ENCODE measurements at regions of chr7 and their contacts with region 1.

Region 1: GRCh38 chr7:43700059-43700501 is 29.2 kb downstream of the COA1 start:
- DNase-seq: peak; percentile 42
- ATAC-seq: peak; percentile 83
- H3K4me3 ChIP-seq: no peak overlapping the region
- H3K27ac ChIP-seq: no peak overlapping the region
- H3K4me1 ChIP-seq: no peaks in the 10 kb centered on the region
- H3K27me3 ChIP-seq: no peaks in the 10 kb centered on the region
- CTCF ChIP-seq: peak; percentile 83; the same call in 1 of the 2 replicates

Region 2: GRCh38 chr7:43628431-43628830 is 71.6 kb before region 1 on chr7:
- CTCF ChIA-PET with region 1: no interaction called
- POLR2A ChIA-PET with region 1: no interaction called
- in situ Hi-C with region 1: no loop called
- intact Hi-C with region 1: no loop called
- DNase-seq: no peak
- ATAC-seq: no peak
- H3K4me3 ChIP-seq: no peak overlapping the region
- H3K27ac ChIP-seq: no peak overlapping the region
- H3K4me1 ChIP-seq: no peaks in the 10 kb centered on the region
- H3K27me3 ChIP-seq: no peaks in the 10 kb centered on the region
- CTCF ChIP-seq: no peak

Region 3: DNA sequence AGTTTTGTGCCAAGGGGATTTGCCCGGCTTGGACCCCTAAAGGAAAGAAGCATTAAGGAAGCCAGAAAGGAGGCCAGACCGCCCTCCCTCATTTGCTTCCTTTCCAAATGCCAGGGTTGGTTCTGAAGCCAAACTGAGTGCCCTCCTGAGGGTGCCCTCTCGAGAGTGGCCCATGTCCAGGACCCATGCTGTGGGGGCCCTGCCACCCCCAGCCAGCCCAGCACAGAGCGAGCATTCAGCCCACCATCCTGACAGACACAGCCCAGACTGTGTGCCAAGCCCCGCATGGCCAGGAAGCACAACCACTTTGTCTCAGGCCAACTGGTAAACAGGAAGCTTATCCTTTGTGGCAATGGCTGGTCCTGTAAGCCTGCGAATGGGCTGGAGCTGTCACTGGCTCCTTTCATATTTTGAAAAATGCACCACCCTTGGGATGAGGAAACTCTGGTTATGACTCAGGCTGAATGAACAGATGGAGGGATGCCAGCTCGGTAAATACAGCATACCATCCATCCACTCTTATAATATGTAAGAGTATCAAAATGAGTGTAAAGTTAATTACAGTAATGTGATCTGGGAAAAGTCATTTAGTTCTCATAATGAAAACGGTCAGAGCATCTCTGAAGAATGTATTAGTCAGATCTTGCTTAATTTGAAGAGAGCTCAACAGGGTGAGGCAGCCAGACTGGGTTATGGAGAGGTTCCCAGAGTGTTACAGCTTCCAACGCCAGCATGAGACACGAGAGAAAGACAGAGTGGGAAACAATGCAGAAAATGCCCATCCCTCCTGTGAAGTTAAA is 52.2 kb before region 1 on chr7:
- CTCF ChIA-PET with region 1: interaction called, 8 read pairs
- POLR2A ChIA-PET with region 1: no interaction called
- in situ Hi-C with region 1: no loop called
- intact Hi-C with region 1: loop called (anchors 5 kb)
- DNase-seq: peak; percentile 98
- ATAC-seq: peak; percentile 81
- H3K4me3 ChIP-seq: peak overlapping the region in 1 of 2 experiments; percentile 6; a peak in 1 of 4 replicates
- H3K27ac ChIP-seq: peak overlapping the region; percentile 69
- H3K4me1 ChIP-seq: peaks cover 51% of the 10 kb centered on the region
- H3K27me3 ChIP-seq: no peaks in the 10 kb centered on the region
- CTCF ChIP-seq: no peak

Region 4: GRCh38 chr7:43735802-43736541 is 35.9 kb after region 1 on chr7:
- CTCF ChIA-PET with region 1: no interaction called
- POLR2A ChIA-PET with region 1: no interaction called
- in situ Hi-C with region 1: no loop called
- intact Hi-C with region 1: no loop called
- DNase-seq: no peak
- ATAC-seq: no peak
- H3K4me3 ChIP-seq: no peak overlapping the region
- H3K27ac ChIP-seq: no peak overlapping the region
- H3K4me1 ChIP-seq: no peaks in the 10 kb centered on the region
- H3K27me3 ChIP-seq: no peaks in the 10 kb centered on the region
- CTCF ChIP-seq: no peak

Region 5: GRCh38 chr7:43799589-43799988 is 99.5 kb after region 1 on chr7:
- CTCF ChIA-PET with region 1: no interaction called
- POLR2A ChIA-PET with region 1: no interaction called
- in situ Hi-C with region 1: no loop called
- intact Hi-C with region 1: no loop called
- DNase-seq: no peak
- ATAC-seq: peak; percentile 66
- H3K4me3 ChIP-seq: no peak overlapping the region
- H3K27ac ChIP-seq: no peak overlapping the region
- H3K4me1 ChIP-seq: no peaks in the 10 kb centered on the region
- H3K27me3 ChIP-seq: no peaks in the 10 kb centered on the region
- CTCF ChIP-seq: no peak

Region 6: GRCh38 chr7:43834463-43835251 is 134.6 kb after region 1 on chr7:
- CTCF ChIA-PET with region 1: interaction called, 15 read pairs
- POLR2A ChIA-PET with region 1: no interaction called
- in situ Hi-C with region 1: no loop called
- intact Hi-C with region 1: no loop called
- DNase-seq: no peak
- ATAC-seq: no peak
- H3K4me3 ChIP-seq: peak overlapping the region; percentile 7 to 34; a peak in 3 of 4 replicates
- H3K27ac ChIP-seq: peak overlapping the region; percentile 71
- H3K4me1 ChIP-seq: no peaks in the 10 kb centered on the region
- H3K27me3 ChIP-seq: no peaks in the 10 kb centered on the region
- CTCF ChIP-seq: no peak

Region 7: GRCh38 chr7:43925984-43926797 is 226.1 kb after region 1 on chr7 and contains the start of gene UBE2D4:
- CTCF ChIA-PET with region 1: no interaction called
- POLR2A ChIA-PET with region 1: no interaction called
- in situ Hi-C with region 1: no loop called
- intact Hi-C with region 1: no loop called
- DNase-seq: peak; percentile 54
- ATAC-seq: peak; percentile 98
- H3K4me3 ChIP-seq: peak within 1 kb of the TSS; percentile 60 to 96
- H3K27ac ChIP-seq: peak within 1 kb of the TSS; percentile 87
- H3K4me1 ChIP-seq: no peaks in the 10 kb centered on the region
- H3K27me3 ChIP-seq: no peaks in the 10 kb centered on the region
- CTCF ChIP-seq: no peak
- total RNA-seq, gene UBE2D4: 35.9 TPM

Measured in Panc1 (cell line).